Activated CD4-positive, alpha-beta memory T cell treated with anti-CD3 and anti-CD28 coated beads for 36 hours (primary cell): ENCODE measurements at regions of chr4 and their contacts with region 1.

Region 1: DNA sequence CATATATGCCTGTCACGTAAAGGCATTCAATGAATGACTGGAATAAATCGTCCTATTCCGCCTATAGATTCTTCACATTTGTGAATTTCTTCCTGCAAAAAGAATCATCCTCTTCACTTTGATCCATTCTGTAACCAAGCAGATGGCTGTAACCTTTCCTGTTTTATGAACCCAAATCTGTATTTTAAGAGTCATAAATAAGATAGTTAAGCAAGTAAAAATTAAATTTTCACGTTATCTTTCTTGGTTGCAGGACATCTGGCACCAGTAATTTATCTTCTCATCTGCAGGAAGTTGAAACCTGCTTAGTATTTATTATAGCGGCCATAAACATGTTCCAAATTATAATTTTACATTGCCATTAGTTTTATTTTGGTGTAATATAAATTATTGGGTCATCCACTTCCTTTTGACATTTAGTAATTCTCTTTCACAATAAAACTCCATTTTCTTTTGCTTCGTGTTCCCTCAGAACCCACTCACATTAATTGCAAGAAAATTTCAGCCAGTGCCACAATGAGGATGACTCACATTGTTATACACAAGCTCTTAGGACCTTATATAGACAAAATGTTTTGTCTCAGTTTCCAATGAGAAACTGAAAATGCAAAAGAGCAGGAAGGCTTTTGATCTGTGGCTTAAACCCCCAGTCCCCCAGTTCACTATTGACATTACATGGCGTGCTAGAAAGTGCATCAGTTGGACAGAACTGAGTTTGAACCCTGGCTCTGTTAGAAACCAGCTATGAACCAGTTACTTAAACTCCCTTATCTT is 51.1 kb downstream of the TMEM156 start:
- DNase-seq: peak; percentile 56
- H3K4me3 Mint-ChIP-seq: peak overlapping the region; percentile 36
- H3K27ac Mint-ChIP-seq: peak overlapping the region; percentile 93
- H3K4me1 Mint-ChIP-seq: peaks cover 64% of the 10 kb centered on the region
- H3K27me3 Mint-ChIP-seq: no peaks in the 10 kb centered on the region

Region 2: GRCh38 chr4:38804654-38805295 is 176.3 kb before region 1 on chr4 and contains the start of gene TLR1:
- CTCF ChIA-PET with region 1: no interaction called
- POLR2A ChIA-PET with region 1: no interaction called
- intact Hi-C with region 1: loop called (anchors 10 kb)
- DNase-seq: peak; percentile 24
- H3K4me3 Mint-ChIP-seq: peak within 1 kb of the TSS; percentile 76
- H3K27ac Mint-ChIP-seq: peak within 1 kb of the TSS; percentile 91
- H3K4me1 Mint-ChIP-seq: peaks cover 35% of the 10 kb centered on the region
- H3K27me3 Mint-ChIP-seq: no peaks in the 10 kb centered on the region
- total RNA-seq, gene TLR1: 1.5 to 1.8 TPM

Region 3: GRCh38 chr4:38939165-38939564 is 41.9 kb before region 1 on chr4:
- CTCF ChIA-PET with region 1: interaction called, 3 read pairs
- POLR2A ChIA-PET with region 1: interaction called, 8 read pairs
- intact Hi-C with region 1: loop called (anchors 1 kb)
- DNase-seq: no peak
- H3K4me3 Mint-ChIP-seq: no peak overlapping the region
- H3K27ac Mint-ChIP-seq: peak overlapping the region; percentile 68
- H3K4me1 Mint-ChIP-seq: peaks cover 41% of the 10 kb centered on the region
- H3K27me3 Mint-ChIP-seq: no peaks in the 10 kb centered on the region

Region 4: GRCh38 chr4:38958453-38959190 is 22.5 kb before region 1 on chr4:
- CTCF ChIA-PET with region 1: interaction called, 6 read pairs
- POLR2A ChIA-PET with region 1: interaction called, 44 read pairs
- intact Hi-C with region 1: loop called (anchors 1 kb)
- DNase-seq: no peak
- H3K4me3 Mint-ChIP-seq: no peak overlapping the region
- H3K27ac Mint-ChIP-seq: peak overlapping the region; percentile 97
- H3K4me1 Mint-ChIP-seq: peaks cover 43% of the 10 kb centered on the region
- H3K27me3 Mint-ChIP-seq: peaks cover under 1% of the 10 kb centered on the region

Region 5: DNA sequence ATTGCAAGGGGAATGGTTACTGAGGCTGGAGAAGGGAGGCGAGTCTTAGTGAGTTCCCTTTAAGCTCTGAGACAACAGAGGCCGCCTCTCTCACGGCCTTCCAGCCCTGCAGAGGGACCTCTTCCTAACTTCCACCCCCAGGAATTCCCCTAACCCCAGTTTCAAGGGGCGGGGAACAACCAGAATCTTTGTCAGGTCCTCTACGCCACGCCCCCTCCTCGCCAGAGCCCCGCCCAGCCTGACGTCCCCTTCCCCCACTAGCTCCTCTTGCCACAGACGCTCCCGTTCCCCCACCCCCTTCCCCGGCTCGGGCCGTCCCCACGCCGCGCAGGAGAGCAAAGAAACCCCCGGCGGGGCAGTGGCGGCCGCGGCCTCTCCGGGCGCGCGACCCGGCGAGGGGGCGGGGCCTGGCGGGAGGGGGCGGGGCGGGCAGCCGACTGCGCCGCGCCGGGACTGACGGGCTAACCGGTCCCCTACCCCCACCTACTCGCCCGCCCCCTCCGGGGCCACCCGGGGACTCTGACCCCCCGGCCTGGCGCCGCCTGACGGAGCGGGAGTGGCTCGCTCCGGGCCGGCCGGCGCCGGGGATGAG is 63.4 kb after region 1 on chr4:
- CTCF ChIA-PET with region 1: interaction called, 6 read pairs
- POLR2A ChIA-PET with region 1: interaction called, 32 read pairs
- intact Hi-C with region 1: loop called (anchors 1 kb)
- DNase-seq: peak; percentile 99
- H3K4me3 Mint-ChIP-seq: peak overlapping the region; percentile 75
- H3K27ac Mint-ChIP-seq: peak overlapping the region; percentile 88
- H3K4me1 Mint-ChIP-seq: peaks cover 50% of the 10 kb centered on the region
- H3K27me3 Mint-ChIP-seq: no peaks in the 10 kb centered on the region

Region 6: GRCh38 chr4:39237179-39237578 is 256.1 kb after region 1 on chr4:
- CTCF ChIA-PET with region 1: no interaction called
- POLR2A ChIA-PET with region 1: no interaction called
- intact Hi-C with region 1: no loop called
- DNase-seq: no peak
- H3K4me3 Mint-ChIP-seq: no peak overlapping the region
- H3K27ac Mint-ChIP-seq: no peak overlapping the region
- H3K4me1 Mint-ChIP-seq: no peaks in the 10 kb centered on the region
- H3K27me3 Mint-ChIP-seq: no peaks in the 10 kb centered on the region

Region 7: GRCh38 chr4:39476187-39476895 is 495.3 kb after region 1 on chr4:
- CTCF ChIA-PET with region 1: no interaction called
- POLR2A ChIA-PET with region 1: no interaction called
- intact Hi-C with region 1: no loop called
- DNase-seq: no peak
- H3K4me3 Mint-ChIP-seq: no peak overlapping the region
- H3K27ac Mint-ChIP-seq: no peak overlapping the region
- H3K4me1 Mint-ChIP-seq: no peaks in the 10 kb centered on the region
- H3K27me3 Mint-ChIP-seq: no peaks in the 10 kb centered on the region